Naive thymus-derived CD4-positive, alpha-beta T cell (primary cell): ENCODE measurements at regions of chr12 and their contacts with region 1.

Region 1: GRCh38 chr12:3988519-3989448 is 115.6 kb upstream of the PARP11 start:
- DNase-seq: peak in 7 of 9 donors; percentile 33 to 71 (median 62)
- ATAC-seq: peak; percentile 87
- H3K4me3 ChIP-seq: peak overlapping the region; percentile 20
- H3K4me3 Mint-ChIP-seq: peak overlapping the region; percentile 62 to 75 (median 70)
- H3K27ac ChIP-seq: peak overlapping the region; percentile 61
- H3K27ac Mint-ChIP-seq: peak overlapping the region; percentile 81 to 95 (median 91)
- H3K4me1 ChIP-seq: peaks cover 9 to 21% of the 10 kb centered on the region in 2 donors
- H3K4me1 Mint-ChIP-seq: peaks cover 12 to 52% (median 37%) of the 10 kb centered on the region in 7 donors
- H3K27me3 ChIP-seq: no peaks in the 10 kb centered on the region
- H3K27me3 Mint-ChIP-seq: peaks cover 0 to 15% (median 0%) of the 10 kb centered on the region in 5 donors

Region 2: DNA sequence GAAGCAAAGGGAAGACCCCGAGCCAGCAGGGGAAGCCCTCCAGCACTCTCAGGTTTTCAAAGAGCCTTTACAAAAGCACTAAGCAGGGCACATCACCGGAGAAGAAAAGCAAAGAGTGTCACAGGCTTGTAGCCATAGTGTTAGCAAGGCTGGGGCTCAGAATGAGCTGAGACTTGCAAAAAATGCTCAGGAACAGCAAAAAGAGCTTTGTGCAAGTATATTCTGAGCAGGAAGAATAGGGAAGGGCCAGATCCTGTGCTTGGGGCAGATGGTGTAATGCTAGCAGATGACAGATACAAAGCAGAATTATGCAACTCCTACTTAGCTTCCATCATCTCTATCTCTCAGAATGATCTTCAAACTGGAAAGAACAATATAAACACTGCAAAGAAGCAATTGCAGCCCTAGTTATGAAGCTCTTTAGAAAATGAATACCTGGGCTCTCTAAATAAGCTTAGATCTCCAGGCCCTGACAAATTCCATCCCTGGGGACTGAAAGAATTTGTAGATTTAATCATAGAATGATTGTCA is 91.9 kb before region 1 on chr12:
- CTCF ChIA-PET with region 1: interaction called, 6 read pairs
- POLR2A ChIA-PET with region 1: interaction called, 10 read pairs
- intact Hi-C with region 1: no loop called
- DNase-seq: no peak
- ATAC-seq: peak; percentile 66
- H3K4me3 ChIP-seq: peak overlapping the region; percentile 38
- H3K4me3 Mint-ChIP-seq: peak overlapping the region; percentile 68 to 89 (median 78)
- H3K27ac ChIP-seq: peak overlapping the region; percentile 71
- H3K27ac Mint-ChIP-seq: peak overlapping the region in 8 of 9 donors; percentile 94 to 98 (median 97)
- H3K4me1 ChIP-seq: peaks cover 44 to 84% of the 10 kb centered on the region in 2 donors
- H3K4me1 Mint-ChIP-seq: peaks cover 2 to 58% (median 45%) of the 10 kb centered on the region in 7 donors
- H3K27me3 ChIP-seq: no peaks in the 10 kb centered on the region
- H3K27me3 Mint-ChIP-seq: no peaks in the 10 kb centered on the region

Region 3: DNA sequence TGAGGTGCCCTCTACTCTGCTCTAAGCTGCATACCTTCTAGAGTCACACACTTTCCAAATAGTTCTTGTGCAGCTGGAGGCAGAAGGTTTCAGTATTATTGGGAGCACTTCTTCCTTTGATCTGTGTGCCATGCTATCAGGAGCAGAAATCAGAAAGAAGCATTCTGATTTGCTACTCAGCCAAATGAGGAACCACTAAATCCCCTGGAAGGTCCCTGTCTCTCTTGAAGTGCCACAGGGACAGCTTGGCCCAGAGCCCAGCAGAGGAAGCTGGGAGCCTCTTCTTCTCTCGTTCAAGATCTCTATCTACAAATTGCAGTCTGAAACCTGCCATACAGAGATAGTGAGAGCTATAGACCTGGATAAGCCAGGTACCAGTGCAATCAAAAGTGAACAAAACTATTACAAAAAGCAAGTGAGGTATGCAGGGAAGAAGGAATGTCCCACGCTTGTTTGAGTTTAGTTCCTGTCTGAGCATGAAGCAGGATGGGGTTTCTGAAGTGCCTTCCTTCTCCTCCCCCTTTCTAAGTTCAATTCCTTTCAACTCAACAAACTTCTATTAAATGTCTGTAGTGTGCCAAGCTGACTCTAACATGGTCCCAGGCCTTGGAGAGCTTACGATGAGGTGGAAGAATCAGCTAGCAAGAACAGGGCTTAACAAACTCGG is 14.7 kb before region 1 on chr12:
- CTCF ChIA-PET with region 1: interaction called, 10 read pairs
- POLR2A ChIA-PET with region 1: interaction called, 40 read pairs
- intact Hi-C with region 1: loop called (anchors 1 to 2 kb)
- DNase-seq: peak in 6 of 9 donors; percentile 23 to 38 (median 32)
- ATAC-seq: peak; percentile 48
- H3K4me3 ChIP-seq: no peak overlapping the region
- H3K4me3 Mint-ChIP-seq: peak overlapping the region; percentile 49 to 84 (median 78)
- H3K27ac ChIP-seq: peak overlapping the region; percentile 60
- H3K27ac Mint-ChIP-seq: peak overlapping the region; percentile 76 to 97 (median 89)
- H3K4me1 ChIP-seq: peaks cover 26 to 66% of the 10 kb centered on the region in 2 donors
- H3K4me1 Mint-ChIP-seq: peaks cover 45 to 84% (median 76%) of the 10 kb centered on the region in 7 donors
- H3K27me3 ChIP-seq: no peaks in the 10 kb centered on the region
- H3K27me3 Mint-ChIP-seq: no peaks in the 10 kb centered on the region

Region 4: DNA sequence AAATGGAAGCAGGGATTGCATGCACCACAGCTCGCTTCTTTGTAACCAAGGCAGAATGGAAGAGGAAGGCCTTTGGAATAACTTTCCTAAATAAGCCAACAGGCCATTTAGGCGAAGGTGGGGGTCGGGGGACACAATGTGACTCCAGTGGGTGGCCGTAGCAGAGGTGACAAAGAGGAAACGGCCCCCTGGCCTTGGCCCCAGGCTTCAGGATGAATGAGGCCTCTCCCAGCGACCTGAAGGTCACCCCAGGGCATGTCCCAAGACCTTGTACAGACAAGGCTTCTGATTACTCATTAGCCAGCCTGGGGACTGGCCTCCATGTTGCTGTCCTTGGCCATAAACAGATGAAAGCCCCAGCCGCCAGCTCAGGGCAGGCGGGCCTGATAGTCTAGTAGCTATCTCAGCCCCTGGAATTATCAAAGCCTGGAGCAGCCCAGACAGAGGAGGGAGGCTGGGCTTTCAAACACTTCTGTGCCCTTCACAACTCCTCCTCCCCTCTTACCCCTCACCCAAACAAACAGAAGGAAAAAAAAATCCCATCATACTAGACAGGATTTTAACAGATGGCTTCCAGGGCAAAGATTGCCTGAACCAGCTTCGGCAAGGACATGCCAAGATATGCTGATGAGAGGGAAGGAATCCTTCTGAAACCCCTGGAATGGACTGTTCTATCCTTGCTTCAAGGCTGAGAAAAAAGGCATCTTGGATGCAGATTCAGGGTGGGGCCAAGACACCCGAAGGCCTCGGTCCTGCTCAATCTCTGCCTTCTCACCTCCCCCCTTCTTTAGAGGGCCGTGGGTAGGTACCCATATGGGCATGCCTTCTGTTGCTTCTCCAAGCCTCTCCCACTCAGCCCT is 26.7 kb after region 1 on chr12:
- CTCF ChIA-PET with region 1: no interaction called
- POLR2A ChIA-PET with region 1: no interaction called
- intact Hi-C with region 1: no loop called
- DNase-seq: no peak
- ATAC-seq: no peak
- H3K4me3 ChIP-seq: no peak overlapping the region
- H3K4me3 Mint-ChIP-seq: no peak overlapping the region
- H3K27ac ChIP-seq: no peak overlapping the region
- H3K27ac Mint-ChIP-seq: no peak overlapping the region
- H3K4me1 ChIP-seq: no peaks in the 10 kb centered on the region
- H3K4me1 Mint-ChIP-seq: no peaks in the 10 kb centered on the region
- H3K27me3 ChIP-seq: no peaks in the 10 kb centered on the region
- H3K27me3 Mint-ChIP-seq: no peaks in the 10 kb centered on the region

Region 5: DNA sequence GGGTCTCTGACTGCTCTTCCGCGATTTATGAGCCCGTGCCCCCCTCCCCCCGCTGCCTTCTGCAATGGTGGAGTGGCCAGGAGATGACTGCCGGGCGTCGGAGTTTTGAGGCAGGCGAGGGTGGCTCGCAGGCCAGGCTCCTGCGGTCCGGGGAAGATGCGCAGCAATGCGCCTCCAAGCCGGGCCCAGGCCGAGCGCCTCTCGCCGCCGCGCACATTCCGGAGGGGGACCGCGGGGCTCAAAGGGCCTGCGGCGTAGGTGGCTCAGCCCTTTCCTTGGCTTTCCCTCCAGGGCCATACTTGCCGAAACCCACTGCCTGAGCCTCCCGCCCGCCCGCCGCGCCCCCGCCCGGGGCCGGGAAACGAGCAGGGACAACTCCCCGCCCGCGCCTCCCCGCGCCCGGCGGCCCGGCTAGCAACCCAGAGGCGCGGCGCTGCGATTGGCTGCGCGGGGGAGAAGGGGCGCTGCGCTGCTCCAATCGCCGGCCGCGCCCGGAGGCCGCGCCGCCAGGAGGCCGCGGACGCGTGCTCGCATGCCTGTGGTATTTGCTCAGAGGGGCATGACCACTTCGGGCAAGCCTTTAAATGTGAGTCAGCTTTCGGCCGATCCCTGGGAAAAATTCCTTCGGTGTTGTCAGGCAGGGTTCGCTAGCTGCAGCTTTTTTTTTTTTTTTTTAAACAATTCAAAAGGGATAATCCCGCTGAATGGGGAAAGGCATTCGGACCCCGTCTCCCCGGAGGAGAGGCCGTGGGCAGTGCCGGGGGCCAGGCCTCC is 42.3 kb after region 1 on chr12:
- CTCF ChIA-PET with region 1: interaction called, 22 read pairs
- POLR2A ChIA-PET with region 1: interaction called, 12 read pairs
- intact Hi-C with region 1: loop called in 1 of 2 experiments (anchors 1 kb)
- DNase-seq: peak; percentile 62 to 83 (median 74)
- ATAC-seq: peak; percentile 95
- H3K4me3 ChIP-seq: peak overlapping the region; percentile 50
- H3K4me3 Mint-ChIP-seq: peak overlapping the region; percentile 60 to 87 (median 84)
- H3K27ac ChIP-seq: peak overlapping the region; percentile 75
- H3K27ac Mint-ChIP-seq: peak overlapping the region in 8 of 9 donors; percentile 60 to 92 (median 86)
- H3K4me1 ChIP-seq: peaks cover 13 to 33% of the 10 kb centered on the region in 2 donors
- H3K4me1 Mint-ChIP-seq: peaks cover 22 to 54% (median 47%) of the 10 kb centered on the region in 7 donors
- H3K27me3 ChIP-seq: no peaks in the 10 kb centered on the region
- H3K27me3 Mint-ChIP-seq: peaks cover 0 to 33% (median 0%) of the 10 kb centered on the region in 5 donors

Region 6: DNA sequence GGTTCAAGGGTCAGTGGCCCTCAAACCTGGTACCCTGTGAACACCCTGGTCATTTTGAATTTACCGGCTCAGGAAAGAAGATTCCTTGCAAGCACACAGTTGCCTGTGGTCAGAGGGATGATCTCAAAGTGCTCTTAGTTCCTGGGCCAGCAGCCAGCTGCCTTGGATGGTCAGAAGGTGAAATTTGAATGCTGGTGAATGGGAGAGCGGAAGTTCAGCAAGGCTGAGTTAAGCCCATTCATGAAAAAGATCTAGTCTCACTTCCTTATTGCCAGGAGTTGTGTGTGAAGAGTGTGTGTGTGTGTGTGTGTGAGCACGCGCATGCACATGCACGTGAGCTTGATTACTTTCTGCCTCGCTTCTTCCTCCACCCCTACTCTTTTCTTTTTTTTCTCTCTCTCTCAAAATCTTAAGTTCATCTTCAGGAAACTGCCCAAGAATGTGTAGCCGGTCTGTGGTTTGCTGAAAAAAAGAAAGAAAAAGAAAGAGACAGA is 129.3 kb after region 1 on chr12:
- CTCF ChIA-PET with region 1: no interaction called
- POLR2A ChIA-PET with region 1: no interaction called
- intact Hi-C with region 1: no loop called
- DNase-seq: peak in 6 of 9 donors; percentile 20 to 54 (median 32)
- ATAC-seq: peak; percentile 83
- H3K4me3 ChIP-seq: peak overlapping the region; percentile 17
- H3K4me3 Mint-ChIP-seq: peak overlapping the region; percentile 18 to 87 (median 78)
- H3K27ac ChIP-seq: no peak overlapping the region
- H3K27ac Mint-ChIP-seq: peak overlapping the region; percentile 22 to 86 (median 78)
- H3K4me1 ChIP-seq: peaks cover 29 to 30% of the 10 kb centered on the region in 2 donors
- H3K4me1 Mint-ChIP-seq: peaks cover 25 to 66% (median 44%) of the 10 kb centered on the region in 7 donors
- H3K27me3 ChIP-seq: no peaks in the 10 kb centered on the region
- H3K27me3 Mint-ChIP-seq: no peaks in the 10 kb centered on the region